Mammary epithelial cell (primary cell): ENCODE measurements at regions of chr14 and their contacts with region 1.

Region 1: GRCh38 chr14:28515571-28515970 is 251.0 kb upstream of the FOXG1 start:
- DNase-seq: peak; percentile 93
- H3K4me3 ChIP-seq: no peak overlapping the region
- H3K27ac ChIP-seq: no peak overlapping the region
- H3K4me1 ChIP-seq: no peaks in the 10 kb centered on the region
- H3K27me3 ChIP-seq: no peaks in the 10 kb centered on the region
- CTCF ChIP-seq: no peak

Region 2: GRCh38 chr14:27929797-27930347 is 585.7 kb before region 1 on chr14:
- CTCF ChIA-PET with region 1: no interaction called
- dilution Hi-C with region 1: no loop called
- in situ Hi-C with region 1: no loop called
- intact Hi-C with region 1: no loop called
- DNase-seq: no peak
- H3K4me3 ChIP-seq: no peak overlapping the region
- H3K27ac ChIP-seq: no peak overlapping the region
- H3K4me1 ChIP-seq: no peaks in the 10 kb centered on the region
- H3K27me3 ChIP-seq: no peaks in the 10 kb centered on the region
- CTCF ChIP-seq: no peak

Region 3: DNA sequence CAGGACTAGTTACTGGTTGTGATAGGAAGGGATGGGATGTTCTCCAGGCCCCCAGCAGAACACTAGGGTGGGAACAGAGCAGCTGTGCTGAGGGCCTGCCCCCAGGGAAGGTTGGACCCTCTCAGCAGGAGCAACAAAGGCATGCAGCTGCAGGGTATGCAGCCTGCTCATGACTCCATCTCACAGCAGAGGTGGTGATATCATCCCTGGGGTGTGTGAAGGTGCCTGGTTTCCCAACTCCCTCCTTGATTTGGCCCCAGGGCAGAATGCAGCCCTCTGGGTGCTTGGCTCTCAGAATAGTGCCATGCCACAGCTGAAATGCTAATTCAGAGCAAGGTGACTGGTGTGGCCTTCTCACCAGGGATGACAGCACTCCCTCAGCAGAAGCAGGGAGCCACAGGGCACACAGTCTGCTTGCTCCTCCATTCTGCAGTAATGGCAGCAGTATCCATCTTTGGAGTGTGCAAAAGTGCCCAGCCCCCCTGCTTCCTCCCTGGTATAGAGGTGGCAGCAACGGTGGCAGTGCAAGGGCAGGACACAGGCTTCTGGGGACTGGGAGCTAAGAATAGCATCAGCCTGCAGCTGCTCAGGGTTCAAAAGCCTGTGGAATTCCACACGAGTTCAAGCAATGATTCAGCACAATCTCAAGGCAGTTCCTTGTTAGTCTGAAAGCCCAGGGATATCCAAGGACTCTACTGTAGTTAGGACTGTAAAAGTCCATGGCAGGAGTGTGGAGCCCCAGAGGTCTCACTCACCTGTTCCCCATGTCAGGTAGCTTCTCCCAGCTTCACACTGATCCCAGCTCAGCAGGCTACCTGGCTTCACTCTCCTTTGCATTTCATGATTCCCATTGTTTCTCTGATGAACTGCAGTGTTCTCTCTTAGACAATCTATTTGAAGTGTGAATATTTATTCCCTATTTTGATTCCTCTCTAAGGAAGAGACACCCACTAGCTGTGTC is 47.1 kb before region 1 on chr14:
- CTCF ChIA-PET with region 1: no interaction called
- dilution Hi-C with region 1: no loop called
- in situ Hi-C with region 1: no loop called
- intact Hi-C with region 1: loop called (anchors 10 kb)
- DNase-seq: peak; percentile 3
- H3K4me3 ChIP-seq: no peak overlapping the region
- H3K27ac ChIP-seq: no peak overlapping the region
- H3K4me1 ChIP-seq: no peaks in the 10 kb centered on the region
- H3K27me3 ChIP-seq: no peaks in the 10 kb centered on the region
- CTCF ChIP-seq: no peak